Ovary (tissue), 10 donors: ENCODE measurements at regions of chr7 and their contacts with region 1.

Region 1: GRCh38 chr7:96982586-96982985 is 22.8 kb upstream of the DLX6 start:
- DNase-seq: no peak
- H3K4me3 ChIP-seq: no peak overlapping the region
- H3K27ac ChIP-seq: no peak overlapping the region
- H3K4me1 ChIP-seq: no peaks in the 10 kb centered on the region
- H3K27me3 ChIP-seq: no peaks in the 10 kb centered on the region
- CTCF ChIP-seq: no peak
- EP300 ChIP-seq: no peak
- POLR2A ChIP-seq: no peak

Region 2: GRCh38 chr7:95089414-95090315 is 1892.9 kb before region 1 on chr7:
- intact Hi-C with region 1: loop called in 1 of 4 experiments (anchors 5 kb)
- DNase-seq: no peak
- H3K4me3 ChIP-seq: no peak overlapping the region
- H3K27ac ChIP-seq: no peak overlapping the region
- H3K4me1 ChIP-seq: no peaks in the 10 kb centered on the region
- H3K27me3 ChIP-seq: no peaks in the 10 kb centered on the region
- CTCF ChIP-seq: no peak
- EP300 ChIP-seq: no peak
- POLR2A ChIP-seq: no peak

Region 3: GRCh38 chr7:96770758-96771157 is 211.8 kb before region 1 on chr7:
- intact Hi-C with region 1: no loop called
- DNase-seq: no peak
- H3K4me3 ChIP-seq: no peak overlapping the region
- H3K27ac ChIP-seq: no peak overlapping the region
- H3K4me1 ChIP-seq: no peaks in the 10 kb centered on the region
- H3K27me3 ChIP-seq: no peaks in the 10 kb centered on the region
- CTCF ChIP-seq: no peak
- EP300 ChIP-seq: no peak
- POLR2A ChIP-seq: no peak